CD4-positive, alpha-beta T cell (primary cell): ENCODE measurements at regions of chr10 and their contacts with region 1.

Region 1: GRCh38 chr10:101840741-101841453 is 2.7 kb downstream of the KCNIP2 start:
- DNase-seq: peak; percentile 49 to 85 (median 62)
- ATAC-seq: peak; percentile 51
- H3K4me3 ChIP-seq: peak overlapping the region; percentile 41
- H3K4me3 Mint-ChIP-seq: peak overlapping the region; percentile 93
- H3K27ac ChIP-seq: no peak overlapping the region
- H3K27ac Mint-ChIP-seq: no peak overlapping the region
- H3K4me1 ChIP-seq: peaks cover 52% of the 10 kb centered on the region
- H3K4me1 Mint-ChIP-seq: peaks cover 64% of the 10 kb centered on the region
- H3K27me3 ChIP-seq: no peaks in the 10 kb centered on the region
- H3K27me3 Mint-ChIP-seq: peaks cover 8% of the 10 kb centered on the region
- CTCF ChIP-seq: peak; percentile 89

Region 2: DNA sequence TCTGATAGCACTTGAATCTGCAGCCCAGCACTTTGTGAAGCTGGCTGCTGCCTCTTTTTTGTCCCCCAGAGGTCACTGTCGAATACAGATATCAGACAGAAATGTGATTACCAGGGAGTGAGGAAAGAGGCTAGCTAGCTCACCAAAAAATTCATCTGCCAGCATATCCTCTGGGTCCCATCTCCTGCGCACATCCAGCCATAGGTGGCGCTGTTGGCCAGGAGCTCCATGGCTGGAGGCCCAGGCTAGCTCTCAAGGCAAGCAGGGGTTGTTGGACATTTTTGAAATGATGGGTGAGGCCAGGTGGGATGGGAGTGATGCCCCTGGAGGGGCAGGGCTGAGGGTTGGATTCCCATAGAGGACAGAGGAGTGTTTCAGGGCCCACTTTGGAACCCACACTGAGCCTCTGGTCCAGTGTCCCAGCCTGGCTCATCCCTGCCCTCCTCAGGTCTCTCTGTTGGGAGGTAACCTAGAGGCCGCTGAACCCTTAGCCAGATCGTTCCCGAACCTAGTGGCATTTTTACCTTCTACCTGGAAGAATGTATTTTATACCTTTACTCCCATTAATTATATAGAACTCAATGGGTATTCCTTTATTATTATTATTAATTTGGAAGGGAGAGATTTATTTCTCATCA is 238.0 kb before region 1 on chr10:
- CTCF ChIA-PET with region 1: no interaction called
- POLR2A ChIA-PET with region 1: no interaction called
- intact Hi-C with region 1: no loop called
- DNase-seq: peak; percentile 12 to 72 (median 48)
- ATAC-seq: peak; percentile 84
- H3K4me3 ChIP-seq: no peak overlapping the region
- H3K4me3 Mint-ChIP-seq: no peak overlapping the region
- H3K27ac ChIP-seq: no peak overlapping the region
- H3K27ac Mint-ChIP-seq: no peak overlapping the region
- H3K4me1 ChIP-seq: no peaks in the 10 kb centered on the region
- H3K4me1 Mint-ChIP-seq: no peaks in the 10 kb centered on the region
- H3K27me3 ChIP-seq: no peaks in the 10 kb centered on the region
- H3K27me3 Mint-ChIP-seq: no peaks in the 10 kb centered on the region
- CTCF ChIP-seq: peak; percentile 66

Region 3: DNA sequence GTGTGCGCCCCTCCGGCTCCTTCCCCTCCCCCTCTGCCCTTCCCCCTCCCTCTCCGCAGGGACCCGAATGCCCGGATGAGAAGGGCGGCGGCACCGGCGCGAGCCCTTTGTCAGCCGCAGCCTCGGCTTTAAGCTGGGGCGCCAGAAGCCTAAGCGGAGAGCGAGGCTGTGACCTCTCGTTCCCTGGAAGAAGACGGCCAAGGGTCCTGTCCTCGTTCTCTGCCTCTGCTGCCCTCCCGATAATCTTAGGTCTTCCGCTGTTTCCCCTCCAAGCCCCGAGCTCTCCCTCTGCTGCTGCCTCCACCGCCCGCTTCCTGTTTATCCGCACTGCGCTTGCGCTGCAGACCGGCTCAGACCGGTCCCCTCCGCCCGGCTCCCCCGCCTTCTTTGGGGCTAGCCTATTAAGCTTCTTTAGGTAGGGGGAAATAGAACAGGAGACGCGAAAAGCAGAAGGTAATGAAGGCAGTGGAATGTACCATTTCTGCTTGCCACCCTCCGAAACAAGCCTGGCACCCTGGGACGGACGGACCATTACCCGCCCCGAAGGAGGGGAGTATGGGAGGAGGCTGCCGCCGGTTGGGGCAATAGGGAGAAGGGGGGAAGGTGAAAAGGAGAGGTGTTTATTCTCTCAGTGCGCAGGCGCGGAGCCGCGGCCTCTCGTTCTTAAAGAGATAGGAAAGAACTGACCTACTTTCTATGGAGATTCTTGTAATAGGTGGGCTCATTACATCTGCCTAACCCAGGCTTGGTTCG is 22.6 kb before region 1 on chr10 and contains the start of gene OGA:
- CTCF ChIA-PET with region 1: interaction called, 21 read pairs
- POLR2A ChIA-PET with region 1: interaction called, 223 read pairs
- intact Hi-C with region 1: loop called in 1 of 2 experiments (anchors 2 kb)
- DNase-seq: peak; percentile 92 to 100 (median 98)
- ATAC-seq: peak; percentile 87
- H3K4me3 ChIP-seq: peak within 1 kb of the TSS; percentile 97
- H3K4me3 Mint-ChIP-seq: peak within 1 kb of the TSS; percentile 99
- H3K27ac ChIP-seq: peak within 1 kb of the TSS; percentile 82 to 87
- H3K27ac Mint-ChIP-seq: peak within 1 kb of the TSS; percentile 96
- H3K4me1 ChIP-seq: peaks cover 29% of the 10 kb centered on the region
- H3K4me1 Mint-ChIP-seq: peaks cover 48% of the 10 kb centered on the region
- H3K27me3 ChIP-seq: no peaks in the 10 kb centered on the region
- H3K27me3 Mint-ChIP-seq: no peaks in the 10 kb centered on the region
- CTCF ChIP-seq: no peak
- total RNA-seq, gene OGA: 395 to 416 TPM

Region 4: GRCh38 chr10:102009801-102010425 is 169.0 kb after region 1 on chr10:
- CTCF ChIA-PET with region 1: interaction called, 32 read pairs
- POLR2A ChIA-PET with region 1: no interaction called
- intact Hi-C with region 1: loop called (anchors 1 kb)
- DNase-seq: peak in 10 of 14 experiments; percentile 2 to 74 (median 23)
- ATAC-seq: peak; percentile 91
- H3K4me3 ChIP-seq: no peak overlapping the region
- H3K4me3 Mint-ChIP-seq: no peak overlapping the region
- H3K27ac ChIP-seq: no peak overlapping the region
- H3K27ac Mint-ChIP-seq: peak overlapping the region; percentile 0
- H3K4me1 ChIP-seq: no peaks in the 10 kb centered on the region
- H3K4me1 Mint-ChIP-seq: peaks cover 5% of the 10 kb centered on the region
- H3K27me3 ChIP-seq: no peaks in the 10 kb centered on the region
- H3K27me3 Mint-ChIP-seq: no peaks in the 10 kb centered on the region
- CTCF ChIP-seq: peak; percentile 74

Region 5: GRCh38 chr10:102064868-102065560 is 224.1 kb after region 1 on chr10 and contains the start of gene HPS6:
- CTCF ChIA-PET with region 1: no interaction called
- POLR2A ChIA-PET with region 1: no interaction called
- intact Hi-C with region 1: loop called in 1 of 2 experiments (anchors 2 kb)
- DNase-seq: peak; percentile 70 to 95 (median 88)
- ATAC-seq: peak; percentile 96
- H3K4me3 ChIP-seq: peak within 1 kb of the TSS; percentile 60
- H3K4me3 Mint-ChIP-seq: peak within 1 kb of the TSS; percentile 92
- H3K27ac ChIP-seq: peak within 1 kb of the TSS; percentile 77 to 82
- H3K27ac Mint-ChIP-seq: peak within 1 kb of the TSS; percentile 89
- H3K4me1 ChIP-seq: peaks cover 39% of the 10 kb centered on the region
- H3K4me1 Mint-ChIP-seq: peaks cover 23% of the 10 kb centered on the region
- H3K27me3 ChIP-seq: no peaks in the 10 kb centered on the region
- H3K27me3 Mint-ChIP-seq: no peaks in the 10 kb centered on the region
- CTCF ChIP-seq: no peak
- total RNA-seq, gene HPS6: 12.8 to 15.0 TPM

Region 6: GRCh38 chr10:102114861-102115618 is 274.1 kb after region 1 on chr10:
- CTCF ChIA-PET with region 1: interaction called, 4 read pairs
- POLR2A ChIA-PET with region 1: interaction called, 3 read pairs
- intact Hi-C with region 1: loop called in 1 of 2 experiments (anchors 5 kb)
- DNase-seq: peak; percentile 65 to 90 (median 84)
- ATAC-seq: peak; percentile 60
- H3K4me3 ChIP-seq: peak overlapping the region; percentile 58
- H3K4me3 Mint-ChIP-seq: peak overlapping the region; percentile 89
- H3K27ac ChIP-seq: peak overlapping the region; percentile 76 to 96
- H3K27ac Mint-ChIP-seq: peak overlapping the region; percentile 89
- H3K4me1 ChIP-seq: peaks cover 77% of the 10 kb centered on the region
- H3K4me1 Mint-ChIP-seq: peaks cover 73% of the 10 kb centered on the region
- H3K27me3 ChIP-seq: no peaks in the 10 kb centered on the region
- H3K27me3 Mint-ChIP-seq: no peaks in the 10 kb centered on the region
- CTCF ChIP-seq: no peak